Right cardiac atrium (tissue), 5 donors: ENCODE measurements at regions of chr4 and their contacts with region 1.

Region 1: DNA sequence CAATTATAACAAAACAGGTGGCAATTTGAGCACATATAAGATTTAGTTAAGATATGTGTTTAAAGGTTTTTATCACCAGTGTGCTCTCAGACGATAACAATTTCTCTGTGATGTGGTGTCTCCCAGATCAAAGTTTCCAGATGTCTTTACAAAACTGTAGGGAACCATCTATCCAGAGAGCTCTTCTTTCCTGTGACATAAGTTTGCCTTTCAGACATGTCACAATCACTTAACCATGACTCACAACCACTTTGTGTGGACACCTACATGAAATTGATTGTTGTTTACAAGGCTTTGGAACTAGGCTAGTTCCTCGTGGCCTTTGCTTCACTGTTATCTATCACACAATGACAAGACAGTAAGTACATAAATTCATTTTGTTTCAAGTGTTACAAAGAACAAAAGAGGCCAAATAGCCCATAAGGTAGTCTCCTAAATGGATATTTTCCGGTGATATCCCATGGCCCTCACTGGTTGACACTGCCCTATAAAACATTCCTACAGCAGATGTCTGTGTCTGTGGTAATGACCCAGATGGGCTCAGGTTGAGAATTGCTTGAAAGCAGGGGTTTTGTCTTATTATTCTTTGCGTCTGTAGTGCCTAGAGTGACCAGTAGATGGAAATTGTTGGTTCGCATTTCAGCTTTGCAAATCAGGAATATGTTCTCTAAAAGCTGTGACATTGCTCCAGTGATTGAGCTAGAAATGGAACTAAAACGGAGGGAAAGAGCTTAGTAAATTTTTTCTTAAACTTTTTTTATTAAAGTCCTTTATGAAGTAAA is 297.8 kb upstream of the FAM241A start:
- DNase-seq: no peak
- ATAC-seq: no peak
- H3K4me3 ChIP-seq: no peak overlapping the region
- H3K27ac ChIP-seq: no peak overlapping the region
- H3K4me1 ChIP-seq: no peaks in the 10 kb centered on the region
- H3K27me3 ChIP-seq: no peaks in the 10 kb centered on the region

Region 2: DNA sequence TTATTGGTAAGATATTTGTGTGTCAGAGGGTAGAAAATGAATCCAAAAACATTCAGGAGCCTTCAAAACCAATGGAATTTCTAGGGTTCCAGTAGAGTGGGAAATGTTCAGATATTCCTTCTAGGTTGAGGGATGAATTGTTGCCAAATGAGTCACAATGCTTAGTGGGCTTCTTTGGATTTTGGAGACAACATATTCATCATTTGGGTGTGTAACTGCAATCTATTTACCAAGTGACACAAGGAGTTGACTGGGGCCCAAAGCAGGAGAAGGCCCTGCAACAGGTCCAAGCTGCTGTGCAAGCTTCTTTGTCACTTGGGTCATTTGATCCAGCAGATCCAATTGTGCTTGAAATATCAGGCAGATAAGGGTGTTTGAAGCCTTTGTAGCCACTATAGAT is 673.2 kb before region 1 on chr4:
- intact Hi-C with region 1: no loop called
- DNase-seq: no peak
- ATAC-seq: no peak
- H3K4me3 ChIP-seq: no peak overlapping the region
- H3K27ac ChIP-seq: no peak overlapping the region
- H3K4me1 ChIP-seq: no peaks in the 10 kb centered on the region
- H3K27me3 ChIP-seq: no peaks in the 10 kb centered on the region

Region 3: DNA sequence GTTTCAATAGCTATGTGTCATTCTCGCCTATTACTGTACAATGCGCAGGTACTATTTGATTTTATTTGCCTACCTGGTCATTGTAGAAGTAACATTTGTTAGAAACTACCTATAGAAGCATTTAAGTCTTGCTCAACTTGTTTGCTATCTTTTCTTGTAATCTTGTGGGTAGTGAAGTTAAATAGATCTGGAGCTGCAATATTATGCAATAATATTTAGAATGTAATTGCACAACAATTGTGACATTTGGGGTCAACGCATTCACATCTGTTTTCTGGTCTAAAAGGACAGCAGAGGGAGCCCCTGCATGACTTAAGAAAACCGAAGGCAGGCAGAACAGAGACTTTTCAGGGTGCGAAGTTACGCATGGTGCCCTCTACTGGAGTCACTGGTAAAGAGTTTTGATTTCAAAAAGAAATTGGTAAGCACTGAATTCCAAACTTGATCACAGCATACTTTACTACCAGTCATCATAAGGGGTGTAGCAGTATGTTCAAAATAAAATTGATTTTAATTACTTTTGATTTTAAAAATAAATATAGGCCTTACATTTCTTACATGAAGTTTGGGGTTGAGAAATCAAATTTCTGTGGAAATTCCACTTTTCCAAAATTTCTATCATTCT is 205.4 kb before region 1 on chr4:
- intact Hi-C with region 1: loop called in 2 of 4 experiments (anchors 10 kb)
- DNase-seq: peak; percentile 39 to 45 (median 44)
- ATAC-seq: peak; percentile 85
- H3K4me3 ChIP-seq: no peak overlapping the region
- H3K27ac ChIP-seq: no peak overlapping the region
- H3K4me1 ChIP-seq: no peaks in the 10 kb centered on the region
- H3K27me3 ChIP-seq: no peaks in the 10 kb centered on the region

Region 4: GRCh38 chr4:111717921-111718320 is 129.6 kb before region 1 on chr4:
- intact Hi-C with region 1: no loop called
- DNase-seq: peak in 1 of 3 donors; percentile 26
- ATAC-seq: no peak
- H3K4me3 ChIP-seq: no peak overlapping the region
- H3K27ac ChIP-seq: no peak overlapping the region
- H3K4me1 ChIP-seq: no peaks in the 10 kb centered on the region
- H3K27me3 ChIP-seq: no peaks in the 10 kb centered on the region